Right lobe of liver (tissue), 6 donors: ENCODE measurements at regions of chr5 and their contacts with region 1.

Region 1: DNA sequence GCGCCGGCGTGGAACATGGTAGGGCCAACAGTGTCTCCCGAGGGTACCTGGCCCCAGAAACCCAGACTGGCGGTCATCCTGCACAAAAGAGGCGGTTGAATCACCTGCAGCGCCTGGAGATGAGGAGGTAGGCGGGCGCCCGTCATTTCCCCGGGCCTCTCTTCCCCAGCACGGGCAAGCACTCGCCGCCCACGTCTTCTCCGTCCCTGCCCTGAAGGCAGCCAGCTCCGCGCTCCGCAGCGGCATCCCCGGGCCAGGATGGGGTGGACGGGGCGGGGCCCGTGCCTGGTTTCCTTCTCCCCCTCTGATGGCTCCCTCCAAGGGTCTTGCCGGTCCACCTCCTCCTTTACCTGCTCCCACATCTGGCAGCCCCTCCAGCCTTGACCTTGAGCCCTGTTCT is 27.1 kb upstream of the N4BP3 start:
- DNase-seq: no peak
- ATAC-seq: no peak
- H3K4me3 ChIP-seq: no peak overlapping the region
- H3K27ac ChIP-seq: no peak overlapping the region
- H3K4me1 ChIP-seq: no peaks in the 10 kb centered on the region
- H3K27me3 ChIP-seq: peaks cover 0 to 11% of the 10 kb centered on the region in 2 donors
- CTCF ChIP-seq: no peak
- POLR2A ChIP-seq: no peak

Region 2: GRCh38 chr5:177370488-177371119 is 715.7 kb before region 1 on chr5:
- intact Hi-C with region 1: no loop called
- DNase-seq: peak; percentile 94 to 98 (median 97)
- ATAC-seq: peak; percentile 66 to 78 (median 72)
- H3K4me3 ChIP-seq: peak overlapping the region; percentile 52 to 64 (median 57)
- H3K27ac ChIP-seq: peak overlapping the region; percentile 20 to 94 (median 51)
- H3K4me1 ChIP-seq: peaks cover 0 to 78% (median 29%) of the 10 kb centered on the region in 4 donors
- H3K27me3 ChIP-seq: no peaks in the 10 kb centered on the region
- CTCF ChIP-seq: peak; percentile 40 to 69 (median 60)
- POLR2A ChIP-seq: no peak

Region 3: DNA sequence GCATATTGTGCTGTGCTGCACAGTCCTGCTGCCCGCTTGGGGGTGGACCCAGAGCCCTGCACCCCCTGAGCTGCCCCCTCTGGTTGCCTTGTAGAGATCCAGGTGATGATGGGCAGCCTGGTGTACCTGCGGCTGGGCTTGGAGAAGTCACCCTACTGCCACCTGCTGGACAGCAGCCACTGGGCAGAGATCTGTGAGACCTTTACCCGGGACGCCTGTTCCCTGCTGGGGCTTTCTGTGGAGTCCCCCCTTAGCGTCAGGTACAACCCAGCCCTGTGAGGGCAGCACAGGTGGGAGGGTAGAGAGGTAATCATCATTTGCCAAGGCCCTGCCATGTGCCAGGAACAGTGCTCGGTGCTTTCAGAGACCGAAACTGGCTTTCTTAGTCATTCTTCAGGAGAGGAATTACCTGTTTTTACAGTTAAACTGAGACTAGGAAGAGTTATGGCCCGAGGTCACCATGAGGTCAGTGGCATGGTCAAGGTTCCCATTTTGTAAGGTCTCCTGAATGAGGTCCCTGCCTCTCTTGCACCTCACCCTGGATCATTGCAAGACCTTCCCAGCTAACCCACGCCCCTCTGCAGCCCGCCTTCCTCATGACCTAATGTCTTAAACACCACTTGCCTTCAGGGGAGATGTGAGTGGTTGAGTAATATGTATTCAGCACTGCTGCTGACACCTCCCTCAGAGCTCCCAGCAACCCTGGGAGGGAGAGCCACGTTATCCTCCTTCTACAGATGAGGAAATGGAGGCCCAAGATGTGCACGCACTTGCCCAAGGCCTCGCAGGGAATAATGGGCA is 59.9 kb after region 1 on chr5:
- intact Hi-C with region 1: loop called in 1 of 2 experiments (anchors 10 kb)
- DNase-seq: peak; percentile 73 to 74 (median 73)
- ATAC-seq: peak; percentile 80 to 86 (median 84)
- H3K4me3 ChIP-seq: no peak overlapping the region
- H3K27ac ChIP-seq: no peak overlapping the region
- H3K4me1 ChIP-seq: no peaks in the 10 kb centered on the region
- H3K27me3 ChIP-seq: no peaks in the 10 kb centered on the region
- CTCF ChIP-seq: peak; percentile 59 to 79 (median 70)
- POLR2A ChIP-seq: no peak

Region 4: DNA sequence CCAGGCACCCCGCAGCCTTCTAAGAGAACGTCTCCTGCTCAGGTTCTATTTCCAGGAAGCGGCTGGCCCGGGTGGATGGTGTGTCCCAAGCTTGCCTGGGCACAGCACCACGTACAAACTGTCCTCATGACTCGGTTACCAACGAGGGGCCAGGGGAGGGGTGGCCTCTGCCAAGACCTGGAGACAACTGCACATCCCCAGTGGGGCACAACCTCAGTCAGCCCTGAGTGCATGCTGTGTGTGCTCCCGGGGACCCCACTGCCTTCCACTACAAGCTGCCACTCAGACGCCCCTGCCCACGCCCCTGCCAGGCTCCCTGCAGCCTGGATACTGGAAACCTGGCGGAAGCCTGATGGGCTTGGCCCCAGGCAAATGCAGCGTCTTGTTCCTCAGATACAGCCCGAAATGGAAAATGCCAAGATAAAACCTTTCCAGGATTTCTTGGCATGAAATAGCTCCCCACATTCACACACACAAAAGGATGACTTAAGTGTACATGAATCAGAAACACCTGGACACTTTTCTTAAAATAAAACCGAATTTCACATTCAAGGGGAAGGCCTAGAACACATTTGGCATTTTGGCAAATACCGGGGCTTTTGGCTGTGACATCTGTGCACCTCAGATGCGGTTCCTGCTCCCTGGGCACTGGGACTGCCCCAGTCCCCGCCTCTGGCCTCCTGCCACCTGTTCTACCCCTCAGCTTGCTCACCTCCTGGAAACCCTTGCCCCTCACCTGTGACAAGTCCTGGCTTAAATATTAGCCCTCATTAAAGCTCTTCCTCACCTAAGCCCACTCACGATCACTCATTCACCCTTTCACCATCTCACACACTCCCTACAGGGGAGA is 441.4 kb after region 1 on chr5:
- intact Hi-C with region 1: no loop called
- DNase-seq: no peak
- ATAC-seq: no peak
- H3K4me3 ChIP-seq: no peak overlapping the region
- H3K27ac ChIP-seq: no peak overlapping the region
- H3K4me1 ChIP-seq: no peaks in the 10 kb centered on the region
- H3K27me3 ChIP-seq: no peaks in the 10 kb centered on the region
- CTCF ChIP-seq: no peak
- POLR2A ChIP-seq: no peak